ENCODE measurements at regions of chr2 and their contacts with region 1.

Region 1: DNA sequence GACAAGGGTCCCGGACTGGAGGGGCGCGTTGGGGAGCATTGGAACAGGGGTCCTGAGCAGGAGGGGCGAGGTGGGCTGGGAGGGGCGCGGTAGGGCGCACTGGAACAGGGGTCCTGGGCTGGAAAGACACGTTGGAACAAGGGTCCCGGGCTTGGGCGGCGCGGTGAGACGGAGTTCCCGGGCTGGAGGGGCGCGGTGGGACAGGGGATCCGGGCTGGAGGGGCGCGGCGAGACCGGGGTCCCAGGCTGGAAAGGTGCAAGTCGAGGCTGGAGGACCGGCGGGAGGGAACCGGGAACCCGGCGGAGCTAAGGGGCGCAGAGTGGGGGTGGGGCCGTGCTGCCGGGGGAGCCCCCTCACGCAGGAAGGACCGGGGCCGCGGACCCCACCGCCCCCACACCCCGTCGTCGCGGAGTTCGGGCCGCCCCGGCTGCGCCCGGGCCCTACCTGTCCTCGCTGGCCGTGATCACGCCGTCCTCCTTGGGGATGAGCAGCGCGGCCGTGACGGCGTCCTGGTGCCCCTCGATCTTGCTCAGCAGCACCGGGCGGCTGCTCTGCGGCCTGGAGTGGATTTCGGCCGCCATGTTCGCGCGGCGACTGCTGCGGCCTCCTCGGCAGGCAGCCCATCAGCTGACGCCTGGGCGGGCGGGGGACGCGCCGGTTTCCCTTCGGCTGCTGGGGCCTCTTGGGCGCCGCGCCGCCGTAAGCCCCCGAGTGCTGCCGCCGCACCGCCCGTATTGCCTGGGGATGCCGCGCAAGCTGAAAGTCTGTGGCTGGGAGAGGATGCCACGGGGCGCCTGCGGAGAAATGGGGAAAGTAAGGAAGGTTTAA is at the start of gene WDFY1:
- DNase-seq: peak; percentile 82
- H3K4me3 Mint-ChIP-seq: peak within 1 kb of the TSS; percentile 92
- H3K27ac Mint-ChIP-seq: peak within 1 kb of the TSS; percentile 86
- H3K4me1 Mint-ChIP-seq: peaks cover 58% of the 10 kb centered on the region
- H3K27me3 Mint-ChIP-seq: no peaks in the 10 kb centered on the region
- total RNA-seq, gene WDFY1: 39.4 to 39.9 TPM

Region 2: DNA sequence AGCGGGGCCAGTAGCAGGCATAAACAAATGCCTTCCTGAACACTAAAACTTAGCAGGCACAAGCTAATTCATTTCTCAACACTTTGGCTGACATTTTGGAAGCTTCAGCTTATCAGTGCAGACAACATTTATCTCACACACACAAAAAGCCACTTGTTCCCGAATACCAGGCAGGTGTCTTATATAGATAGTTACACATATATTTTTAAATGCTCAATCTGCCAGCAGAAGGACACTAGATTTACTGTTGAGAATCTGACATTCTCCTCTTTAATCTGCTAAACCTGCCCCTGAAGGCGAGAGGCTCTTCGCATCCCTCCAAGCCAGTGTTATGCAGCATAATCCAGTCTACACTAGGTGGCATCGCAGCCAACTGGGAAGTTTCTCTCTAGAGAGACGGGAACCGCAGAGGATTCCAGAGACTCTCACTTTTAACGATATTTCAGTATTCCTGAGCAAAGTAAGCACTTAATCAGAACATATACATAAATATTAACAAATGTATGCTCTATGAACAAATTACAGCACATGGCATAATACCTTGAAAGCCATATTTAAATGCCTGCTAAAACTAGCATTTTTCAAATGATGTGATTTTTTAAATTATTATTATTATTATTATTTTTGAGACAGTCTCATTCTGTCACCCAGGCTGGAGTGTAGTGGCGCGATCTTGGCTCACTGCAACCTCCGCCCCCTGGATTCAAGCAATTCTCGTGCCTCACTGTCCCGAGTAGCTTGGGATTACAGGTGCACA is 252.5 kb before region 1 on chr2:
- CTCF ChIA-PET with region 1: no interaction called
- intact Hi-C with region 1: loop called (anchors 5 kb)
- DNase-seq: peak; percentile 27
- H3K4me3 Mint-ChIP-seq: no peak overlapping the region
- H3K27ac Mint-ChIP-seq: no peak overlapping the region
- H3K4me1 Mint-ChIP-seq: peaks cover 5% of the 10 kb centered on the region
- H3K27me3 Mint-ChIP-seq: peaks cover 9% of the 10 kb centered on the region

Region 3: GRCh38 chr2:223837287-223838061 is 107.4 kb before region 1 on chr2 and contains the start of gene AP1S3:
- CTCF ChIA-PET with region 1: interaction called, 3 read pairs
- intact Hi-C with region 1: loop called (anchors 2 kb)
- DNase-seq: peak; percentile 83
- H3K4me3 Mint-ChIP-seq: peak within 1 kb of the TSS; percentile 97
- H3K27ac Mint-ChIP-seq: peak within 1 kb of the TSS; percentile 53
- H3K4me1 Mint-ChIP-seq: peaks cover 13% of the 10 kb centered on the region
- H3K27me3 Mint-ChIP-seq: peaks cover 2% of the 10 kb centered on the region
- total RNA-seq, gene AP1S3: 10.7 to 12.8 TPM

Region 4: DNA sequence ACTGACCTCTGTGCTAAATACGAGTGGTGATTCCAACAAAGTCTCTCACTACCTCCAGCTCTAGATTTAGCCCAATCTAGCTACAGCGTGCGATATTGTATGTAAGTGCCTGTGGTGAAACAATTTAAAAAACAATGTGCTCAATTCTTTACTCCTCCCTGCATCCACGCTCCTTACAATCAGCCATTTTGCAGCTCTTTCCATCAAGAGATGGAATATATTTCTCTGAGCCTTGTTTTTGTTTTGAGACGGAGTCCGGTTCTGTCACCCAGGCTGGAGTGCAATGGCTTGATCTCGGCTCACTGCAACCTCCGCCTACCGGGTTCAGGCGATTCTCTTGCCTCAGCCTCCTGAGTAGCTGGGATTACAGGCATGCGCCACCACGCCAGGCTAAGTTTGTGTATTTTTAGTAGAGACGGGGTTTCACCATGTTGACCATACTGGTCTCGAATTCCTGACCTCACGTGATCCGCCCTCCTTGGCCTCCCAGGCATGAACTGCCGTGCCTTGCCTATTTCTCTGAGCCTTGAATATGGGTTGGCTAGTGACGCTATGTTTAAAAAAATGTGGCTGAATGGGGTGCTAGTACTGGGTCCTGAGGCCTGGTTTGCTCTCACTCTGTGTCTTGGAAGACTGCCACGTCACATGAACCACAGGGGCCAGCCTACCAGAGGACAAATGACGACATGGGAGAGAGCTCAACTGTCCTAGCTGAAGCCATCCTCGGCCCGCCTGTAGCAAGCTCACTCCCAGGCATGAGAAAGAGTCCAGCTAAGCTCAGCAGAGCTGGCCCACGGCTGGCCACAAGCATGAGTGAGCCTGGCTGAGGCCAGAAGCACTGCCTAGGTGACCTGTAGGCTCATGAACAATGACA is 14.6 kb before region 1 on chr2:
- CTCF ChIA-PET with region 1: interaction called, 10 read pairs
- intact Hi-C with region 1: loop called (anchors 1 kb)
- DNase-seq: no peak
- H3K4me3 Mint-ChIP-seq: peak overlapping the region; percentile 16
- H3K27ac Mint-ChIP-seq: no peak overlapping the region
- H3K4me1 Mint-ChIP-seq: peaks cover 42% of the 10 kb centered on the region
- H3K27me3 Mint-ChIP-seq: no peaks in the 10 kb centered on the region

Region 5: GRCh38 chr2:224520064-224520463 is 575.1 kb after region 1 on chr2:
- CTCF ChIA-PET with region 1: no interaction called
- intact Hi-C with region 1: loop called (anchors 5 kb)
- DNase-seq: peak; percentile 64
- H3K4me3 Mint-ChIP-seq: no peak overlapping the region
- H3K27ac Mint-ChIP-seq: peak overlapping the region; percentile 24
- H3K4me1 Mint-ChIP-seq: peaks cover 58% of the 10 kb centered on the region
- H3K27me3 Mint-ChIP-seq: no peaks in the 10 kb centered on the region

Region 6: GRCh38 chr2:225041851-225042799 is 1097.2 kb after region 1 on chr2 and contains the start of gene DOCK10:
- CTCF ChIA-PET with region 1: no interaction called
- intact Hi-C with region 1: loop called (anchors 5 kb)
- DNase-seq: peak; percentile 60
- H3K4me3 Mint-ChIP-seq: peak within 1 kb of the TSS; percentile 85
- H3K27ac Mint-ChIP-seq: peak within 1 kb of the TSS; percentile 96
- H3K4me1 Mint-ChIP-seq: peaks cover 39% of the 10 kb centered on the region
- H3K27me3 Mint-ChIP-seq: no peaks in the 10 kb centered on the region
- total RNA-seq, gene DOCK10: 123 to 137 TPM